Transverse colon (tissue), 4 donors: ENCODE measurements at regions of chr6 and their contacts with region 1.

Region 1: GRCh38 chr6:52337633-52338290 is 24.2 kb upstream of the PAQR8 start:
- DNase-seq: no peak
- H3K4me3 ChIP-seq: no peak overlapping the region
- H3K27ac ChIP-seq: peak overlapping the region in 1 of 4 donors; percentile 20
- H3K4me1 ChIP-seq: peaks cover 0 to 12% (median 5%) of the 10 kb centered on the region in 4 donors
- H3K27me3 ChIP-seq: no peaks in the 10 kb centered on the region
- CTCF ChIP-seq: no peak
- EP300 ChIP-seq: no peak
- POLR2A ChIP-seq: no peak

Region 2: GRCh38 chr6:52310932-52311331 is 26.8 kb before region 1 on chr6:
- in situ Hi-C with region 1: no loop called
- intact Hi-C with region 1: loop called (anchors 1 kb)
- DNase-seq: no peak
- H3K4me3 ChIP-seq: no peak overlapping the region
- H3K27ac ChIP-seq: no peak overlapping the region
- H3K4me1 ChIP-seq: peaks cover 0 to 23% (median 2%) of the 10 kb centered on the region in 4 donors
- H3K27me3 ChIP-seq: no peaks in the 10 kb centered on the region
- CTCF ChIP-seq: no peak
- EP300 ChIP-seq: no peak
- POLR2A ChIP-seq: no peak